Mammary epithelial cell (primary cell): ENCODE measurements at regions of chr14 and their contacts with region 1.

Region 1: DNA sequence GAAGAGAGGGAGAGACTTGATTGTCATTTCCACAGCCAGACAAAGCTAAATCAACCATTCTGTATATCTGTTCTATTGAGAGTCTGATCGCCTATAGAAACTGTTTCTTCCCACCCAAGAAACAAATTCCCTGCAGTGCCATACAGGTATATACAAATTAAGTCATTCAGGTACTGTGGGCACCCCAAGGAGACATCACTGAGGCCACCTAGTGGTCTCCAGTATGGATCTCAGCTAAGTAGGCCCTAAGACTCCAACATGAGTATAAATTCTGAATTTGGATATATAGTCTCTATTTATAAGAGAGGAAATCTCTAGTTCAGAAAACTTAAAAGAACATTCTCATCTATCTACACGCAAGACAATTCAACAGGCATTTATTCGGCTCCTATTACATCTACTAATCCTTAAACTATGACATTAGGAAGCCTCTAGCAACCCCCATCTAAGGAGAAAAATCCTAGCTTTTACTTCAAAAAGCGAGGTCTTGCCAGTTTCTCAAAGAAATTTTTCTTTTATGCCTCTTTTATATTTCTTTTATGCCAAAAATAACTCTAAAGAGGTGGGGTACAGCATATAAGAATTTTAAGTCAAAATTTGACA is 62.6 kb downstream of the DCAF5 start:
- DNase-seq: peak; percentile 55
- H3K4me3 ChIP-seq: no peak overlapping the region
- H3K27ac ChIP-seq: no peak overlapping the region
- H3K4me1 ChIP-seq: peaks cover 55% of the 10 kb centered on the region
- H3K27me3 ChIP-seq: no peaks in the 10 kb centered on the region
- CTCF ChIP-seq: peak; percentile 82 to 92

Region 2: DNA sequence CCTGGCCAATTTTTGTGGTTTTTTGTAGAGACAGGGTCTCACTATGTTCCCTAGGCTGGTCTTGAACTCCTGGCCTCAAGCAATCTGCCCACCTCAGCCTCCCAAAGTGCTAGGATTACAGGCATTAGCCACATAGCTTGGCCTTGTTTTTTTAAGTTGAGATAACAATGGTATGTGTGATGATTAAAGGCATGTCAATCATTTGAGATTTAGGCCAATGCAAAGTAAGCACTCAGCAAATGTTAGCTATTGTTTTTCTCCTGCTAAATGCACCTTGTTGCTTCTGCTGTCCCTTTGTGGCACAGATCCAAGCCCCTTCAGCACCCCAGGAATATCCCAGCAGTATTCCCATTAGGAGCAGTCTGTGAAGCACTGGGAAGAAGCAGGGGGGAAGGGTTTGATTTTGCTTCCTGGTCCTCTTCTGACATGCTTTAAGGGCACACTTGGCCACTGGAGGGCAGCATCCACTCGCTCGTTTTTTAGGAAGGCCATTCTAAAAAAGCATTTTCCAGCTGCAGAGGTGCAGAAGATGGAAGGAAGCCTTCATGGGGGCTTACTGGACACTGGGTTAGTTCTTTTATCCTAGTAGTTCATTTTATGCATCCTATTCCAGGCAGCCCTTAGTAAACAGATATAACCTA is 227.2 kb before region 1 on chr14:
- CTCF ChIA-PET with region 1: interaction called, 3 read pairs
- dilution Hi-C with region 1: loop called (anchors 25 kb)
- in situ Hi-C with region 1: no loop called
- intact Hi-C with region 1: loop called (anchors 1 kb)
- DNase-seq: peak; percentile 59
- H3K4me3 ChIP-seq: no peak overlapping the region
- H3K27ac ChIP-seq: no peak overlapping the region
- H3K4me1 ChIP-seq: no peaks in the 10 kb centered on the region
- H3K27me3 ChIP-seq: no peaks in the 10 kb centered on the region
- CTCF ChIP-seq: peak; percentile 75 to 84

Region 3: GRCh38 chr14:68911594-68912227 is 178.6 kb before region 1 on chr14:
- CTCF ChIA-PET with region 1: no interaction called
- dilution Hi-C with region 1: no loop called
- in situ Hi-C with region 1: loop called in 1 of 2 experiments (anchors 25 kb)
- intact Hi-C with region 1: loop called (anchors 1 kb)
- DNase-seq: peak; percentile 65
- H3K4me3 ChIP-seq: no peak overlapping the region
- H3K27ac ChIP-seq: no peak overlapping the region
- H3K4me1 ChIP-seq: peaks cover 4% of the 10 kb centered on the region
- H3K27me3 ChIP-seq: no peaks in the 10 kb centered on the region
- CTCF ChIP-seq: peak; percentile 98 to 99

Region 4: GRCh38 chr14:68961781-68962584 is 128.3 kb before region 1 on chr14:
- CTCF ChIA-PET with region 1: no interaction called
- dilution Hi-C with region 1: loop called (anchors 10 kb)
- in situ Hi-C with region 1: no loop called
- intact Hi-C with region 1: no loop called
- DNase-seq: peak; percentile 92
- H3K4me3 ChIP-seq: no peak overlapping the region
- H3K27ac ChIP-seq: peak overlapping the region; percentile 43
- H3K4me1 ChIP-seq: peaks cover 99% of the 10 kb centered on the region
- H3K27me3 ChIP-seq: no peaks in the 10 kb centered on the region
- CTCF ChIP-seq: no peak

Region 5: DNA sequence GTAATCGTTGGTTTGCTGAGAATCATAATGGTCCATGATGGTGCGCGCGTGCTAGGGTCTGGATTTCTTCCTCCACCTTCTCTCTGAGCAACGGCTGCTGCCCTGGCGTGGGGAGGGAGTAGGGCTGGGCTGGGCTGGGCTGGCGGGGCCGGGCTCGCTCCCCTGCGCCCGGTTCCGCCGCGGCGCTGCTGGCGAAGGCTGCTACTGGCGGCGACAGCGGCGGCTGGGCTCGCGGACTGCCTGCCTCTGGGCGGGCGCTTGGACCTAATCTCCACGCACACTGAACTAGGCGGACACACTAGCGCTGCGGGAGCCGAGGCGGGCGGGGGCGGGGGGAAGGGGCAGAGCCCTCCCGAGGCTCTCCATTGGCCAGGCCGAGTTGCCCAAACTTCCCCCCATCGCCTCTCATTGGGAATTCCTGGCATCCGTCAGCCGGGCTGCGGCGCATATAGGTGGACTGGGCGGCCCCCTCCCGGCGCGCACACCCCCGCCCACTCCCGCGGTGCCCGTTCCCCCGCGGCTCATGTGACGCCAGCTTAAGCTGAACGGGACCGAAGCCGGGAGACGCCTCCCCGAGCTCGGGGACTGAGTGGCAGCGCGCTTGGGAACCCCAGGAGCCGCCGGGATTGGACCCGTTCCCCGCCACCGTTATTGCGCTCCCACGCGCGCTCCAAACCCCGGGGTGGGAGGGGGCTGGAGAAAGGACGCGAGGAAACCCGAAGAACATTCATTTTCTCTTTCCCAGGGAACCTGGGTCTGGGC is 111.1 kb before region 1 on chr14 and contains the start of gene ACTN1:
- CTCF ChIA-PET with region 1: no interaction called
- dilution Hi-C with region 1: no loop called
- in situ Hi-C with region 1: no loop called
- intact Hi-C with region 1: loop called (anchors 1 kb)
- DNase-seq: peak; percentile 98
- H3K4me3 ChIP-seq: peak within 1 kb of the TSS; percentile 86 to 96 (median 96)
- H3K27ac ChIP-seq: peak within 1 kb of the TSS; percentile 85
- H3K4me1 ChIP-seq: peaks cover 45% of the 10 kb centered on the region
- H3K27me3 ChIP-seq: no peaks in the 10 kb centered on the region
- CTCF ChIP-seq: no peak
- total RNA-seq, gene ACTN1: 841 to 1,322 TPM

Region 6: GRCh38 chr14:69045857-69046475 is 44.3 kb before region 1 on chr14:
- CTCF ChIA-PET with region 1: no interaction called
- dilution Hi-C with region 1: no loop called
- in situ Hi-C with region 1: no loop called
- intact Hi-C with region 1: no loop called
- DNase-seq: no peak
- H3K4me3 ChIP-seq: no peak overlapping the region
- H3K27ac ChIP-seq: no peak overlapping the region
- H3K4me1 ChIP-seq: peaks cover 19% of the 10 kb centered on the region
- H3K27me3 ChIP-seq: no peaks in the 10 kb centered on the region
- CTCF ChIP-seq: no peak

Region 7: DNA sequence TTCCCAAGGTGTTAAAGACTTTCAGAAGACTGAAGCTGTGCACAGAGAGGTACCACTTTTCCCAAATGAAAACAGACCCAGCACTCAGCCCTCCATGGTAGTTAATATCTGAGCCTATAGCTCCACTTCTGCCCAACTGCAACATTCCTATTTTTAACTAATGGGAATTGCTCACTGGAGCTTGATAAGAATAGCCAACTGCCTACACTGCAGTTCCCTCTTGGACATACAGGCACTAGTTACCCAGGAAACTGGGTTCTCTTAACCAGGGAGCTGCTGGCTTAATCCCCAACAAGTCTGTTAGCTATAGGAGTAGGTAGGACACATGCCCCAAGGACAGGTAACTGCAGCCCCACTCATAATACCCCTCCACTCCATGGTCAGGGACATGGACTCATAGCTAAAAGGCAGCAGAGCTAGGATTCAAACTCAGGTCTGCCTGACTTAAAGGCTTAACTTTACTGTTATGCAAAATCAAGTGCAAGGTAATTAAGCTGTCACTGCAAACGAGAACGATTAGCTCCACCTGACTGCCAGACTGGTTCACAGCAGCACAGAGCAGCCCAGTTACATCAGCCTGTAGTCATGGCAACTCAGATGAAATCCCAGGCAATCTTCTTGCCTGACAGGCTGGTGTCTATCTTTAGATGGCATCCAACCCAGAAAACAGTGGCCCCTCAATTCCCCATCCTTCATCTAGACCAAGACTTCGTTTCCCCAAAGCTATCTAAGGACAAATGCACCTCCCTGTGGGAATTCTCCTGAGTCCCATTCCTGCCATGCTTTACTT is 34.1 kb before region 1 on chr14:
- CTCF ChIA-PET with region 1: no interaction called
- dilution Hi-C with region 1: no loop called
- in situ Hi-C with region 1: no loop called
- intact Hi-C with region 1: loop called (anchors 5 kb)
- DNase-seq: peak; percentile 40
- H3K4me3 ChIP-seq: no peak overlapping the region
- H3K27ac ChIP-seq: no peak overlapping the region
- H3K4me1 ChIP-seq: no peaks in the 10 kb centered on the region
- H3K27me3 ChIP-seq: no peaks in the 10 kb centered on the region
- CTCF ChIP-seq: peak in 1 of 2 donors; percentile 57

Region 8: GRCh38 chr14:69079183-69079742 is 11.0 kb before region 1 on chr14:
- CTCF ChIA-PET with region 1: interaction called, 3 read pairs
- dilution Hi-C with region 1: no loop called
- in situ Hi-C with region 1: no loop called
- intact Hi-C with region 1: loop called (anchors 1 kb)
- DNase-seq: peak; percentile 51
- H3K4me3 ChIP-seq: no peak overlapping the region
- H3K27ac ChIP-seq: peak overlapping the region; percentile 80
- H3K4me1 ChIP-seq: peaks cover 29% of the 10 kb centered on the region
- H3K27me3 ChIP-seq: no peaks in the 10 kb centered on the region
- CTCF ChIP-seq: no peak

Region 9: DNA sequence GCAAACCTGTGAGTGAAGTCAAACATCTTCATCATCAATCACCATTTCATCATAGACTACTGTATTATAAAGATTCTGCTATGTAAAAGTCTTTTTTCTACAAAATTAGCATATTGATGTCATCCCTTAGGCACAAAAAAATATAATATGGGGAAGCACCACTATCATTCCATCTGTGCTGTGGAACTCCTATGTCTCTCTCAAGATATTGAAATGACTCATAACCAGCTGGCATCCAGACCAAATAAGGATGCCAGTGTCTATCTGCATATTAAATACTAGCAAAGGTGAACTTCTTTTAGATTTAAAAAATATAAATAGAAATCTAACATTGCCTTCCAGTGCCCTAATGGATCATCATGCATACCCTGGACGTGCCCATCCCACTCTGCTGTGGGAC is 80.6 kb after region 1 on chr14:
- CTCF ChIA-PET with region 1: no interaction called
- dilution Hi-C with region 1: no loop called
- in situ Hi-C with region 1: no loop called
- intact Hi-C with region 1: no loop called
- DNase-seq: peak; percentile 31
- H3K4me3 ChIP-seq: no peak overlapping the region
- H3K27ac ChIP-seq: no peak overlapping the region
- H3K4me1 ChIP-seq: no peaks in the 10 kb centered on the region
- H3K27me3 ChIP-seq: peaks cover 2% of the 10 kb centered on the region
- CTCF ChIP-seq: no peak